ENCODE measurements at regions of chr20 and their contacts with region 1.

Region 1: GRCh38 chr20:14189794-14190402 is 147.5 kb downstream of the FLRT3 start:
- DNase-seq: peak; percentile 26
- H3K4me3 ChIP-seq: no peak overlapping the region
- H3K27ac ChIP-seq: no peak overlapping the region
- H3K27me3 ChIP-seq: no peaks in the 10 kb centered on the region
- CTCF ChIP-seq: peak; percentile 67

Region 2: DNA sequence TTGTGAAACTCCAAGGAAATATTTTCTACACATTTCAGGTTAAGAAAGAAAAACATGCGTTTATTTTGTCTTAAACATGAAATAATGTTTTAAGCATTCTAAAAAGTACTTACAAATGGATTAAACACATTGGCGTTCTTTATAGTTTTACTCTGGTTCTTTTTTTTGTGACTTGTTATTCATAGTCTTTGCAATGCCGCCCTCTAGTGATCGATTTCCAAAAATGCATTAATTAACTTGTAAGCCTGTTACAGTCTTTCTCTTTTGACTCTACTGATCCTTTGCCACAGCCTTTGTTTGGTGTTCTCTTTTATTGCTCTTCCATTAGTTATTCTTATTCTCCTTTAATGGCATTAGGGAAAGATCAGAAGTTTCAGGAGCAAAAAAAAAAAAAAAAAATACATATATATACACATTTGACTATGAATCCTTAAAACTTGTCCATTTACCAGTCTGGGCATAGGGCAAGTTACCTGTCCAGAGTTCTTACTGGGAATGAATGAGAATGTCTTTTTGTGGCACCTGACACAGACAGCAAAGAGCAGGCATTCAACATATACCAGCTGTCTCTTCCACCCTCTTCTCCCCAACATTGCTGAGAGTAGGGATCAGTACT is 134.7 kb before region 1 on chr20:
- CTCF ChIA-PET with region 1: no interaction called
- POLR2A ChIA-PET with region 1: no interaction called
- DNase-seq: peak; percentile 20
- H3K4me3 ChIP-seq: no peak overlapping the region
- H3K27ac ChIP-seq: no peak overlapping the region
- H3K27me3 ChIP-seq: no peaks in the 10 kb centered on the region
- CTCF ChIP-seq: peak; percentile 64

Region 3: GRCh38 chr20:14219801-14220461 is 30.0 kb after region 1 on chr20:
- CTCF ChIA-PET with region 1: interaction called, 12 read pairs
- POLR2A ChIA-PET with region 1: no interaction called
- DNase-seq: no peak
- H3K4me3 ChIP-seq: no peak overlapping the region
- H3K27ac ChIP-seq: no peak overlapping the region
- H3K27me3 ChIP-seq: peaks cover 3% of the 10 kb centered on the region
- CTCF ChIP-seq: no peak

Region 4: DNA sequence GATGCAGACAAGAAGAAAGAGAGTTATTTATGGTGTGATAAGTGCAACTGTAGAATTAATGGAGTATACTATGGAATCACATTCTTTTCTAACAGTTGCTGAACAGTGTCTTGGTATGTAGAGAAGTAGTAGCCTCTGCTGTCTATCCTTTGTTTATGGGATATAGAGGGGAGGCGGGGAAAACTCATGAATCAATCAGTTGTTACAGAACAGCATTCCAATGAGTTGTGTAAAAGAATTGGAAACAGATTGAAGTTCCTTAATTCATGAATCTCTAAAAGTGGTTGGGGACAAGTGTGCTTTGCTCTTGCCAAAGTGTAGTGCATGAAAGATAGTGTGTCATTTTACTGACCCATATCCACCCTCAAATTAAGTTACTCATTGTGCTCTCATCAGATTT is 69.8 kb after region 1 on chr20:
- CTCF ChIA-PET with region 1: interaction called, 35 read pairs
- POLR2A ChIA-PET with region 1: no interaction called
- DNase-seq: no peak
- H3K4me3 ChIP-seq: no peak overlapping the region
- H3K27ac ChIP-seq: no peak overlapping the region
- H3K27me3 ChIP-seq: no peaks in the 10 kb centered on the region
- CTCF ChIP-seq: no peak

Region 5: GRCh38 chr20:14264869-14265268 is 75.0 kb after region 1 on chr20:
- CTCF ChIA-PET with region 1: interaction called, 35 read pairs
- POLR2A ChIA-PET with region 1: no interaction called
- DNase-seq: no peak
- H3K4me3 ChIP-seq: no peak overlapping the region
- H3K27ac ChIP-seq: no peak overlapping the region
- H3K27me3 ChIP-seq: no peaks in the 10 kb centered on the region
- CTCF ChIP-seq: peak; percentile 56

Region 6: GRCh38 chr20:14561741-14562221 is 371.9 kb after region 1 on chr20:
- CTCF ChIA-PET with region 1: interaction called, 11 read pairs
- POLR2A ChIA-PET with region 1: no interaction called
- DNase-seq: peak; percentile 27
- H3K4me3 ChIP-seq: no peak overlapping the region
- H3K27ac ChIP-seq: no peak overlapping the region
- H3K27me3 ChIP-seq: no peaks in the 10 kb centered on the region
- CTCF ChIP-seq: peak; percentile 43